Activated CD4-positive, alpha-beta memory T cell treated with anti-CD3 and anti-CD28 coated beads for 36 hours (primary cell): ENCODE measurements at regions of chr7 and their contacts with region 1.

Region 1: DNA sequence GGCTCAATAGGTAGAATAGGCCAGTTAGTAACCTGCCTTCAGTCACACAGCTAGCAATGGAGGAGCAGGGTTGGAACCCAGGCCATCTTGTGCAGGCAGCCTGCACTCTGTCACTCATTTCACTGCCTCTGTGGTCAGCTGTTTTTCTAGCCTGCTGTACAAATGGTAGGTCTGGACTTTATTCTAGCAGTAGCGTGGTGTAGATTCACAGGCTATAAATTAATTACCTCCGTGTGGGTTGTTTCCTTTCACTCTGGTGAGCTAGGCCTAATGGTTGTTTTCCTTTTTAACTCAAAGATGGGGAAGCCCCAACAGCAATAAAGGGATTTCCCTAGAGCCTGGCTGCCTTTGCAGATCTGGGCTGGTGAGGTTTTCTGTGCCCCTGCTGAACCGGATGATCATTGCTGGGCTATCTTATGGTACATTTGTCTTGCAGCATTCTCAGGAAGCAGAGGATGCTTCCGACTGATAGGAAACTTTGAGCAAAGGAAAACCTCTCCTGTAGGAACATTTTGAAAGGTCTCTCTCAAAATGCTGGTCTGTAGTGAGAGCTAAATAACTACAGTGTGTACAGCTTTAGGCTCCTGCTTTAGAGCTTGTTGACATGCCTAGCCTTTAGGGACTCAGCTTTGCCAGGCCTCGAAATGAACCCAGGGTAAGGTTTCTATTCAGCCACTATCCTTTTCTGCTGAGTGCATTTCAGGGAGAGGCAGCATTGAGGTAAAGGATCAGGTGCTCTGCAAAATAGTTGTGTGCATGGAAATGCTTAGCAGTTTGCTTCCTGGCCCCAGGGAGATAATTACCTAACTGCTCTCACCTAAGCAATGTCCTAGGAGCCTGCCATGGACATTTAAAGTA is 157.4 kb downstream of the ST7 start:
- DNase-seq: peak; percentile 69
- H3K4me3 Mint-ChIP-seq: no peak overlapping the region
- H3K27ac Mint-ChIP-seq: peak overlapping the region; percentile 33
- H3K4me1 Mint-ChIP-seq: peaks cover 29% of the 10 kb centered on the region
- H3K27me3 Mint-ChIP-seq: no peaks in the 10 kb centered on the region

Region 2: GRCh38 chr7:116953727-116954442 is 156.8 kb before region 1 on chr7:
- CTCF ChIA-PET with region 1: no interaction called
- POLR2A ChIA-PET with region 1: interaction called, 3 read pairs
- intact Hi-C with region 1: loop called (anchors 1 kb)
- DNase-seq: peak; percentile 31
- H3K4me3 Mint-ChIP-seq: peak overlapping the region; percentile 92
- H3K27ac Mint-ChIP-seq: peak overlapping the region; percentile 87
- H3K4me1 Mint-ChIP-seq: peaks cover 24% of the 10 kb centered on the region
- H3K27me3 Mint-ChIP-seq: no peaks in the 10 kb centered on the region

Region 3: GRCh38 chr7:116984917-116985316 is 125.8 kb before region 1 on chr7:
- CTCF ChIA-PET with region 1: interaction called, 373 read pairs
- POLR2A ChIA-PET with region 1: no interaction called
- intact Hi-C with region 1: no loop called
- DNase-seq: no peak
- H3K4me3 Mint-ChIP-seq: no peak overlapping the region
- H3K27ac Mint-ChIP-seq: no peak overlapping the region
- H3K4me1 Mint-ChIP-seq: peaks cover 4% of the 10 kb centered on the region
- H3K27me3 Mint-ChIP-seq: no peaks in the 10 kb centered on the region

Region 4: DNA sequence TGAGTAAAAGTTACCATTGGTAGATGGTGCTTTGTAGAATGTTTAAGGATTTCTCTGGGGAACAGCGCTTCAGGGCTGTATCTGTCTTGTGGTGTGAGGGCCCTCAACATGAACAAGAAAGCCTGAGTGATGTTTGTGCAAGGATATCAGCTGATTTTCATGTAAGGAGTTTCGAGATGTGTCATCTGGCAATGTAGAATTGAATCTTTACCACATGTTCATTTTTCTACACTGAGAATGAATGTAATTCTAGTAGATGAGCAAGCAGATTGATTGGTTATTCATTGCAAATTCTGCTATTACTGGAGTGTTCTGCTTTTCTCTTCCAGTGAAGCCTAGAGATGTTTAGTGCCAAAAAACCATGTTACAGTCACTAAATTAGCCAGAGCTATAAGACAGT is 69.7 kb before region 1 on chr7:
- CTCF ChIA-PET with region 1: no interaction called
- POLR2A ChIA-PET with region 1: no interaction called
- intact Hi-C with region 1: loop called (anchors 2 kb)
- DNase-seq: no peak
- H3K4me3 Mint-ChIP-seq: no peak overlapping the region
- H3K27ac Mint-ChIP-seq: no peak overlapping the region
- H3K4me1 Mint-ChIP-seq: peaks cover 10% of the 10 kb centered on the region
- H3K27me3 Mint-ChIP-seq: no peaks in the 10 kb centered on the region